Posterior cingulate gyrus (tissue), 11 donors: ENCODE measurements at regions of chr1 and their contacts with region 1.

Region 1: DNA sequence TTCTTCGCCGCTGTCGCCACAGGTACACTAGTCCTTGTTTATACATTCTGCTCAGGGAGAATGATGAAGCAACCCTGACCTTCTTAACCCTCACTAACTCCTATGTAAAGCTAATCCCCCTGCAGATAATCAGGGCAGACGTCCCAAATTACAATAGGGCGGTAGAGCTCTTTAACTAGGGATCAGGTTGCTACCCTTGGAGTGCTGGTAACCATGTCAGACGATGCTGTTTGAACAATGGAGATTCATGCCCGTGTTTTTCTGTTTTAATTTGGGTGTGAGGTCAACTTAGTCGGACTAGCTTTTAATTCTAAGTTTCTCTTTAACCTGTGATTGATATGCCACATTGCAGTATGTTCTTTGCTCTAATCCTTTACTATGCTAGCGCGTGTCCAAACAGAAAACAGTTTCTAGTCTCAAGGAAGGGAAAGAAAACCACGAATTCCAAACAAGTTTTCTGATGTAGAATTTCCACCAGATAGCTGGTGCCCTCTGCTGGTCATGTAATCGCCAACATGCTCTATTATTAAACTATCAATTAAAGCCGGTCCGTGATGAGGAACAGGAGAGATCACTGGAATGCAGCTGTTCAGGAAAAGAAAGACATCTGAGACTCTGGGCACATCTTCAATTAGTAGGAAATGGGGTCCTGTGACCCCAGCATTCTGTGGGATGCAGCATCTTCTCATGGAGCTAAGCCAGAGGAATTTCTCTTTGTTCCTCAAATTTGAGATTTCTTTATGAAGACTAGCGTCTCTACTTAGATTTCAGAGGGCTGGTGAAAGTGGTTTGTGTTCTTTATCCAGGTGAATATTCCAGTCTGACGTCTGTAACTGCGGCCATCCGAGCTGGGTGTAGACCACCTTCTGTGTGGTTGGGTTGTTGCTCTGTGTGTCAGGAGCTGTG is 18.3 kb upstream of the VAMP3 start:
- DNase-seq: peak in 6 of 10 donors; percentile 46 to 87 (median 69)

Region 2: GRCh38 chr1:7704214-7705047 is 48.3 kb before region 1 on chr1:
- intact Hi-C with region 1: loop called (anchors 5 kb)
- DNase-seq: peak; percentile 95 to 100 (median 98)